Posterior vena cava (tissue), 2 donors: ENCODE measurements at regions of chr5 and their contacts with region 1.

Region 1: DNA sequence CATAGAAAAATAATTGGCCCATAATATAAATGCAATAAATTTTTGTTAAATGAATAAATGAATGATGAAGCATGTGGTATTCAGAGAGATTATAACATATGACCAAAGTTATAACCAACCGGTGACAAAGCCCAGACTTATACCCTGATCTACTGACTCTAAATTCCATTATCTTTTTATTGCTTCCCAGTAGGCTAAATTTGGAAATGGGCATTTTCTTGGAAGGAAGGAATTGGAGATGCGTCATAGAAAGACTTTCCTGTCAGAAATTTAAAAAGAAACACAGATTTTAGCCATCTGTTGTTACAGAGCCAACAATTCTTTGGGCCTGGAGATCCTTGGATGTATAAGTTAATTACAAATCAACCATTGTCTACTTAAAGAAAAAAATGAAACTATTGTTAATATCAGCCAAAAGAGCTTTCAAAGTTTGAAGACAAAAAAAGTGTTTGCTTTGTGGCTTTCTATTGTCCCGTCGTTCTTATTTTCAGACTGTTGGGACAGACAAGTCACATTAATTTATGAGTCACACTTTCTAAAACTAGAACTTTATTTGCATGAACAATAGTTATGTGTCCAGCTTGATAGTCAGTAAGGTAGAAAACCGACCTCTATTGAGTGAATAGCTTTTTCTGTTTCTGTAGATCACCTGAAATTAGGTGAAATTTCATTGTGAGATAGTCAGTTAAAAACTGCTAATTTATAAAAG is 428.7 kb downstream of the GABRG2 start:
- DNase-seq: no peak

Region 2: GRCh38 chr5:163585206-163585605 is 1089.0 kb after region 1 on chr5:
- intact Hi-C with region 1: loop called in 1 of 2 experiments (anchors 10 kb)
- DNase-seq: no peak